Endothelial cell of umbilical vein (primary cell): ENCODE measurements at regions of chr7 and their contacts with region 1.

Region 1: GRCh38 chr7:152436111-152436930 is 518 bp upstream of the KMT2C start:
- DNase-seq: peak; percentile 91
- H3K4me3 ChIP-seq: peak overlapping the region in 2 of 3 experiments; percentile 47 to 92
- H3K27ac ChIP-seq: peak overlapping the region; percentile 72
- H3K4me1 ChIP-seq: peaks cover 9% of the 10 kb centered on the region
- H3K27me3 ChIP-seq: no peaks in the 10 kb centered on the region
- CTCF ChIP-seq: no peak
- POLR2A ChIP-seq: no peak

Region 2: DNA sequence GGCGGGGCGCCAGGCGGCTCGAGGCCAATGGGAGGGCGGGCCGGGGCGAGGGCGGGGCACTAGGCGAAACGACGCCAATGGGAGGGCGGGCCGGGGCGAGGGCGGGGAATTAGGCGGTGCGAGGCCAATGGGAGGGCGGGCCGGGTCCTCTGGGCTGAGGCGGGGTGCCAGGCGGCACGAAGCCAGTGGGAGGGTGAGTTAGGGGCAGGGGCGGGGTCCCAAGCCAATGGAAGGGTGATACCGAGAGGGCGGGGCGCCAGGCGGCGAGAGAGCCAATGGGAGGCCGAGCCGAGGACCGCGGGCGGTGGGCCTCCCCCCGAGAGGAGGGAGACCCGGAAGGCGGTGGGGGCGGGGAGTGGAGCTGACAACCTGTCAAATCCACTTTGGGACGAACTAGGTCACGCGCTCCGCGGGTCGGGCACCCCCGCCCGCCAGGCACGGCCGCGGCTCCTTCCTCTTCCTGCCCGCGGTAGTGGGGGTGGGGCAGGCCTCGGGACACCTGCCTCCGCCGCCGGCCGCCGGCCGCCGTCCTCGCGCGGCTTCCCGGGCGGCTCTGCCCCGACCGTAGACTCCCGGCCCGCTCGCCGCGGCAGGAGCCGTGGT is 27.5 kb after region 1 on chr7:
- CTCF ChIA-PET with region 1: interaction called, 4 read pairs
- POLR2A ChIA-PET with region 1: no interaction called
- dilution Hi-C with region 1: no loop called
- intact Hi-C with region 1: loop called (anchors 1 kb)
- DNase-seq: peak; percentile 99
- H3K4me3 ChIP-seq: peak overlapping the region; percentile 42 to 97 (median 69)
- H3K27ac ChIP-seq: peak overlapping the region; percentile 91
- H3K4me1 ChIP-seq: peaks cover 12% of the 10 kb centered on the region
- H3K27me3 ChIP-seq: no peaks in the 10 kb centered on the region
- CTCF ChIP-seq: no peak
- POLR2A ChIP-seq: peak; percentile 76

Region 3: DNA sequence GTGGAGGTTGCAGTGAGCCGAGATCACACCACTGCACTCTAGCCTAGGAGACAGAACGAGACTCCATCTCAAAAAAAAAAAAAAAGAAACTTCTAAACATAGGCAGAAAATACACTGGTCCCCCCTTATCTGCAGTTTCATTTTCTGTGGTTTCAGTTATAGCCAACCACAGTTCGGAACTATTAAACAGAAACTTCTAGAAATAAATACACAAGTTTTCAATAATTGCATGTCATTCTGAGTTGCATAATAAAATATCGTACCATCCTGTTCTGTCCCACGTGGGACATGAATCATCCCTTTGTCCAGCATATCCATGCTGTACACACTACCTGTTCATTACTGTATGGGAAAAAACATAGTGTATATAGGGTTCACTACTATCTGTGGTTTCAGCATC is 231.6 kb after region 1 on chr7:
- CTCF ChIA-PET with region 1: no interaction called
- POLR2A ChIA-PET with region 1: no interaction called
- dilution Hi-C with region 1: no loop called
- intact Hi-C with region 1: loop called (anchors 2 kb)
- DNase-seq: no peak
- H3K4me3 ChIP-seq: no peak overlapping the region
- H3K27ac ChIP-seq: no peak overlapping the region
- H3K4me1 ChIP-seq: peaks cover 13% of the 10 kb centered on the region
- H3K27me3 ChIP-seq: no peaks in the 10 kb centered on the region
- CTCF ChIP-seq: no peak
- POLR2A ChIP-seq: no peak

Region 4: DNA sequence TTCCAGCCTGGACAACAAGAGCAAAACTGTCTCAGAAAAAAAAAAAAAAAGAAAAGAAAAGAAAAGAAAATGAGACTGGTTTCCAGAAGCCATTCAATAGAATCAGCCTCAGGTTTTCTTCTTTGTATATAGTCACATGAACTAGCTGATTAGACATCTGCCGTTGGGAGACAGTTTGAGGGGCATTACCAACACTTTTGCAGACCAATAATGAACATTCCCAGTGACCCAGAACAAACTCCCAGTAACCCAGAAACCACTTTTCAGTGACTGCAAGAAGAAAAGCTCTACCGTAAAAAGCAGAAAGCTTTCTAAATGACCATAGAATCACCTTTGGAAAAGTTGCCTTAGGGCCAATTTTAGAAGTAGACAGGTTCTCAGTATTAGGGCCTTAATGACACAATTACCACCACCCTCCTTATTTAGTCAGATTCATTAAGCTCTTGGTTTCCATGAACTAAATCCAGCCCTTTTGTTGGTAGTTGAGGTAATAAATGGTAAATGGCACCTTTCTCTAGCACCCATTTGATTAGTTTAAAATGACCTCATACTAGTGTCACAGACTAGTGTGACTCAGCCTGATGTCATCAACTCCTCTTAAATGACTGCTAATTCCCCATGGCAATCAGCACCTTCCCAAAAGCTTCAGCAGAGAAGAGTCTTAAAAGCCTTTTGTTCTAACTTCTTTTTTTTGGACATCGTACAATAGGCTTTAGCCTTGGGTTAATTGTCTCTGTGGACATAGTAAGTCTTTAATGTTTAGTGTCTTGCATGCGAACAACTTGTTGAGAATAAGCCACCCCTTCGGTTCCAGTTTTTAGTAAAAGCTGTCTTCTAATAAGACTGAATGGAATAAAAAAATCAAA is 273.2 kb after region 1 on chr7:
- CTCF ChIA-PET with region 1: interaction called, 3 read pairs
- POLR2A ChIA-PET with region 1: no interaction called
- dilution Hi-C with region 1: no loop called
- intact Hi-C with region 1: loop called (anchors 2 kb)
- DNase-seq: no peak
- H3K4me3 ChIP-seq: no peak overlapping the region
- H3K27ac ChIP-seq: no peak overlapping the region
- H3K4me1 ChIP-seq: no peaks in the 10 kb centered on the region
- H3K27me3 ChIP-seq: no peaks in the 10 kb centered on the region
- CTCF ChIP-seq: no peak
- POLR2A ChIP-seq: no peak